CD8-positive, alpha-beta T cell (primary cell): ENCODE measurements at regions of chr11 and their contacts with region 1.

Region 1: DNA sequence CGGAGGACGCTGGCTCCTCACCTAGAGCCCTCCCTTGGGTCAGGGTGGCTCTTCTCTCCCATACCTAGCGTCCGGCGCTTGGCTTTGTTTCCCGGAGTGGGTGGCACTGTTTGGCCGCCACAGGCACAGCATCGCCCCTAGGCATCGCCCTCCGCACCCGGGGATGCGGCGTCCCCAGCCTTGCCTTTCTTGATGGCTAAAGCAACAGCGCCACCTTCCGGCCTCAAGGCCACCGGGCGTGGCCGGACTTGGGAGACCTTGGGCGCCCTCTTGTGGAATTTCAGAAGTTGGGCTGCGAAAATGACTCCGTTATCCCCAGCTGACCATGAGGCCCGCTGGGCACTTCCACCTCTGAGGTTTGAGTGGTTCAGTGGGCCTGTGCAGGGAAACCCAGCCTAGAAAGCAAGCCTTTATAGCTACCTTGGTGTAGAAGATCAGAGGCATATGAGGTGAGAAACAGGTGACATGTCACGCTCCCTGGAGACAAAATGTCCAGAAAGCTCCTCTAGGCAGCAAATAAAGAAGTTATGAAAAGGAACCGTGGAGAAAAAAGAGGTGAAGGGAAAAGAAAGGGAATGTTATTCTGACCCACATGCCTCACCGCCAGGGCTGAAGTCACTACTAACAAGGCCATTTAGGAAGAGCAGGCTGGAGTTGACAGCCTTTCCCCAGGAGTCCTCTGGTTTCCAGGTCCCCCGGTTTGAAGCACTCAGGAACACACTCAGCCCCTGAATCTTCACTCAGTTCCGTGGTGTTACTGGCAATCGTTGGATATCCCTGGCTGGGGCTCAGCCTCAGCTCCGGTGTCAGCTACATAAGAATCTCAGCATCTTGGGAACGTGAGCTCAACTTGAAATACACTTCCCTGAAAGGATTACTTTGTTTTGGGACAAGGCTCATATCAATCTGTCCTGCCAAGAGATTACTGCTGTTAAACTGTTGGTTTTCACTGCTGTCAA is 54.1 kb downstream of the SNX19 start:
- DNase-seq: peak; percentile 70 to 92 (median 88)
- ATAC-seq: peak; percentile 88
- H3K4me3 ChIP-seq: no peak overlapping the region
- H3K4me3 Mint-ChIP-seq: no peak overlapping the region
- H3K27ac ChIP-seq: no peak overlapping the region
- H3K27ac Mint-ChIP-seq: no peak overlapping the region
- H3K4me1 ChIP-seq: peaks cover 8% of the 10 kb centered on the region
- H3K4me1 Mint-ChIP-seq: no peaks in the 10 kb centered on the region
- H3K27me3 ChIP-seq: no peaks in the 10 kb centered on the region
- H3K27me3 Mint-ChIP-seq: peaks cover 6% of the 10 kb centered on the region
- CTCF ChIP-seq: peak; percentile 100

Region 2: GRCh38 chr11:130434521-130435223 is 427.5 kb before region 1 on chr11:
- CTCF ChIA-PET with region 1: interaction called, 163 read pairs
- POLR2A ChIA-PET with region 1: no interaction called
- intact Hi-C with region 1: loop called (anchors 1 kb)
- DNase-seq: peak; percentile 31 to 86 (median 66)
- ATAC-seq: peak; percentile 92
- H3K4me3 ChIP-seq: peak overlapping the region; percentile 67 to 77
- H3K4me3 Mint-ChIP-seq: no peak overlapping the region
- H3K27ac ChIP-seq: no peak overlapping the region
- H3K27ac Mint-ChIP-seq: no peak overlapping the region
- H3K4me1 ChIP-seq: peaks cover 10% of the 10 kb centered on the region
- H3K4me1 Mint-ChIP-seq: peaks cover 15% of the 10 kb centered on the region
- H3K27me3 ChIP-seq: peaks cover 5 to 6% of the 10 kb centered on the region in 2 experiments
- H3K27me3 Mint-ChIP-seq: peaks cover 19% of the 10 kb centered on the region
- CTCF ChIP-seq: peak; percentile 89

Region 3: GRCh38 chr11:130737866-130738431 is 124.2 kb before region 1 on chr11:
- CTCF ChIA-PET with region 1: no interaction called
- POLR2A ChIA-PET with region 1: no interaction called
- intact Hi-C with region 1: no loop called
- DNase-seq: no peak
- ATAC-seq: no peak
- H3K4me3 ChIP-seq: no peak overlapping the region
- H3K4me3 Mint-ChIP-seq: no peak overlapping the region
- H3K27ac ChIP-seq: no peak overlapping the region
- H3K27ac Mint-ChIP-seq: no peak overlapping the region
- H3K4me1 ChIP-seq: no peaks in the 10 kb centered on the region
- H3K4me1 Mint-ChIP-seq: peaks cover 6% of the 10 kb centered on the region
- H3K27me3 ChIP-seq: no peaks in the 10 kb centered on the region
- H3K27me3 Mint-ChIP-seq: no peaks in the 10 kb centered on the region
- CTCF ChIP-seq: no peak

Region 4: GRCh38 chr11:130839981-130840666 is 22.1 kb before region 1 on chr11:
- CTCF ChIA-PET with region 1: interaction called, 12 read pairs
- POLR2A ChIA-PET with region 1: no interaction called
- intact Hi-C with region 1: no loop called
- DNase-seq: no peak
- ATAC-seq: no peak
- H3K4me3 ChIP-seq: no peak overlapping the region
- H3K4me3 Mint-ChIP-seq: no peak overlapping the region
- H3K27ac ChIP-seq: no peak overlapping the region
- H3K27ac Mint-ChIP-seq: no peak overlapping the region
- H3K4me1 ChIP-seq: no peaks in the 10 kb centered on the region
- H3K4me1 Mint-ChIP-seq: no peaks in the 10 kb centered on the region
- H3K27me3 ChIP-seq: no peaks in the 10 kb centered on the region
- H3K27me3 Mint-ChIP-seq: peaks cover 18% of the 10 kb centered on the region
- CTCF ChIP-seq: no peak

Region 5: GRCh38 chr11:130872981-130873380 is 10.8 kb after region 1 on chr11:
- CTCF ChIA-PET with region 1: interaction called, 83 read pairs
- POLR2A ChIA-PET with region 1: no interaction called
- intact Hi-C with region 1: no loop called
- DNase-seq: no peak
- ATAC-seq: no peak
- H3K4me3 ChIP-seq: no peak overlapping the region
- H3K4me3 Mint-ChIP-seq: no peak overlapping the region
- H3K27ac ChIP-seq: no peak overlapping the region
- H3K27ac Mint-ChIP-seq: peak overlapping the region; percentile 56
- H3K4me1 ChIP-seq: no peaks in the 10 kb centered on the region
- H3K4me1 Mint-ChIP-seq: no peaks in the 10 kb centered on the region
- H3K27me3 ChIP-seq: no peaks in the 10 kb centered on the region
- H3K27me3 Mint-ChIP-seq: no peaks in the 10 kb centered on the region
- CTCF ChIP-seq: no peak